ENCODE measurements at regions of chr5 and their contacts with region 1.

Region 1: DNA sequence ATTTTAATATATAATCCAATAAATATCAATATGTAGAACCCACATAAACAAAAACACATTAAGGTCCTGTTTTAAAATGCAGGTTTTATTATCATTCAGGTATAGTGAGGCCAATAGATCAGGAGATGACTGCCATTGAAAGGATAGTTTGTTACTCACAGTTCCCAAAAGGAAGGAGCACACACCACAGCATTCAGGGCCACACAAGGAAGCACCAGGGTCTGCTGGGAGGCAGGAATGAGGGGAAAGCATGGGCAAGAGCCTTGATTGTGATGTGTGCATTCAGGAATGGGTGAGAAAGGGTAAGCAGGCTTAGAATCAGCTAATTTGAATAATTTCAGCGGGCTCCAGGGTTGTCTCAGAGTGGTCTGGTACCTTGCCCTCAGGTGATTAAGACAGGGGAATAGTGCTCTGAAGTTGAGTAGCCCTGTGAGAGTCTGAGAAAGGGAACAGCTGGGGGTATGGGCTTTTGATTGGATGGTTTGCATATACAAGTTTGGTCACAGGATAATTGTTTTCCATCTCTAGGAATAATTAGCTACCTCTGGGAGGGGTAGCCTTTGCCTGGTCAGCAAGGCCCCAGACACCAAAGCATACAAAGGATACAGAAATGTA is 19.8 kb upstream of the OTULIN start:
- DNase-seq: no peak
- ATAC-seq: no peak
- H3K4me3 ChIP-seq: no peak overlapping the region
- H3K27ac ChIP-seq: no peak overlapping the region
- H3K4me1 ChIP-seq: no peaks in the 10 kb centered on the region
- H3K27me3 ChIP-seq: no peaks in the 10 kb centered on the region

Region 2: DNA sequence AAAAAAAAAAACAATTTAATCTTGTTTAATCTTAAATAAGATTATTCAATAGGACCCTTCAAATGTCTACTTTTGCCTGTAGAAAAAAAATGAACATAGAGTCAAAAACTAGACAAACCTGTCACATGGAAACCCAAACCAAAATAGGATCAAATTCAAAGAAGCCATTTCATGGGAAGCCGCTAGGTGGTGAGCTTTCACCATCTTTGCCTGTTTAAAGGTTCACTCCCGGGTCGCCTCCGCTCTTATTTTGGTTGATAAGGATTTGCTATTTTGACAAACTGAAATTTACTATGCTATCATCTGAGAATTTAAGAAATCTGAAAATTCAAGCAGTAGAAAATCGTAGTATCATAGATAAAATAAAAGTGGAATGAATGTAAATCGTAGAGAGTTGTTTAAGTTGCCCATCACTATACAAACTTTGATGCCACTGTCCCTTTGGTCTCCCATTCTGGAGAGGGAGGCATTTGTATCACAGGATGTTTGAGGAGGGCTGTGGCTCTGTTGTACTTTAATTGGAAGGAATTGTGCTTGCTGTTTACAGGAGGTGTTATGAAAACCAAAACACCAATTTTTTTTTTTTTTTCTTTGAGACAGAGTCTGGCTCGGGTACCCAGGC is 656.8 kb before region 1 on chr5:
- intact Hi-C with region 1: loop called (anchors 10 kb)
- DNase-seq: peak in 1 of 2 donors; percentile 58
- ATAC-seq: no peak
- H3K4me3 ChIP-seq: no peak overlapping the region
- H3K27ac ChIP-seq: no peak overlapping the region
- H3K4me1 ChIP-seq: no peaks in the 10 kb centered on the region
- H3K27me3 ChIP-seq: no peaks in the 10 kb centered on the region

Region 3: DNA sequence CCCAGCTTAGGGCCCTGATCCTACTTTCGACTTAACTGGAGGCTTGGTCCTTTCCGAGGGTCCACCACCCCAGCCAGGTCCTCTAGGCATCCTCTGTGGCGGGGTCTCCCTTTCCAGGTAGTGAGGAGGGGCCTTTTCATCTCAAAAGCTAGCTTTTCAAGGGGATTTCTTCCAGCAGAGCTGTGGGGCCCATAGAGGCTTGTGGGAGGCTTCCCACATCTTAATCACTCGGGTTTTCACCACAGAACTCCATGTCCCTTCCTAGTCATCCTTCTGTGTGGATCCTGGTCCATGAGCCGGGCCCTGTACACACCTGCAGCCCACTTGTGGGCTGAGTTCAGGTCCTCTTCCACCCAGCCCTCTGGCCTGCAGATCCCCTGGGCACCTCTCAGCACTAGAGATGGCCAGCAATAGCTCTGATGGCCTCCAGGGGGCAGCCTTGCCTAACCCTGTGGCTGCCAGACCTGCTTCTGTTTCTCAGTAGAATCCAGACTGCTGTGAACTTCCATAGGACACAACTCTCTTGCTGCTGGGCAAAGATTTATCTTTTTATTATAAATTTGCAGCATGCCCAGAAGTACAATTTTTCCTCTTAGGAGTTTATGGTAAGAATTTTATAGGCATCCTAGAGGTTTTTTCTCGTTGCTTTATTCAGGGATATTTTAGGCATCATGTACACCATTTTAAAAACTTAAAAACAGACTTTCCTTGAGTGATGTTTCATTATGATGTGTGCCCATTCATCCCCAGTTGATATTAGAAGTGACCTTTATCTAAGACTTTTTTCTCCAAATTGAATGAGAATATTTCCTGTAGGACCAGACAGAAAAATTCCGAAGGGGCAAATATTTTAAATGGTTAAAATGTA is 292.7 kb before region 1 on chr5:
- intact Hi-C with region 1: loop called in 1 of 2 experiments (anchors 5 kb)
- DNase-seq: peak; percentile 67 to 83
- ATAC-seq: peak; percentile 92
- H3K4me3 ChIP-seq: no peak overlapping the region
- H3K27ac ChIP-seq: no peak overlapping the region
- H3K4me1 ChIP-seq: no peaks in the 10 kb centered on the region
- H3K27me3 ChIP-seq: no peaks in the 10 kb centered on the region

Region 4: DNA sequence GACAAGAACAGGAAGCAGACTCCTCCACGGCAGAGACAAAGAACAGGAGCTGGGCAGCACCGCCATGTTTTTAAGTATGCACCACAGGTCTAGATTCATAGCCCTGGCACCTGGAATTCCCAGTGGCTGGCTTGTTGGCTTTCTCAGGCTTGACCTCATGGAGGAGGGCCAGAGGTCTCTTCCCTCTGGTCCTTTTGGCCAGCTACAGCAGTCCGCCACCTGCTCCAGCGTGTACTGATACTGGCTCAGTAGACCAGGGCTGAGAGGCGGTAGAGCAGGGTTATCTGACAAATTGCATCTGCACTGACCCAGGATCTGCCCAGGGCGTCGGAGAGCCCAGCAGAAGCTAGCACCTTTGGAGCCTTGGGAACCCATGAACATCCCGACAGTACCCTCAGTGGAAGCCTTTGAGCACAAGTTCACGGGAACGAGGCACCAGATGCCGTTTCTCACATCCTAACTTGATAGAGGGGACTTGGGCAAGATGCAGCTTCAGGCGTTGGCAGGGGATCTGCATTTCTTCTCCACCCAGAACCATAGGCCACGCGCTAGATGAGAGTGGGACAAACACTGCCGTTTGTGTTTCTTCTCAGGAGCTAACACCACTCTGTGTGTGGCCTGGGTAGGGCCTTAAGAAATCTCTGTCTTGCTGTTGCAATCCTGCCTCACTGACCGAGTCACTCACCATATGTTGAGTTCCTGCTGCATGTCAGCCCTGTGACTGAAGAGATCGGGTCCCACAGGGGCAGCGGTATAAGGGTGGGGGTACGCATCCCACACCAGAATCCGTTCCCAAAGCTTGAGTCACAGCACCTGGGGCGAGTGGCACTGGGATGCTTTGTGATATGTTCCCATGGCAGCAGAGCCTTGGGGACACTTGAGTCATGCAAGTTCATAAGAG is 153.5 kb before region 1 on chr5:
- intact Hi-C with region 1: loop called in 1 of 2 experiments (anchors 10 kb)
- DNase-seq: no peak
- ATAC-seq: no peak
- H3K4me3 ChIP-seq: no peak overlapping the region
- H3K27ac ChIP-seq: no peak overlapping the region
- H3K4me1 ChIP-seq: no peaks in the 10 kb centered on the region
- H3K27me3 ChIP-seq: no peaks in the 10 kb centered on the region

Region 5: GRCh38 chr5:14700478-14701436 is 56.0 kb after region 1 on chr5:
- intact Hi-C with region 1: no loop called
- DNase-seq: no peak
- ATAC-seq: no peak
- H3K4me3 ChIP-seq: no peak overlapping the region
- H3K27ac ChIP-seq: peak overlapping the region in 1 of 2 donors; percentile 3
- H3K4me1 ChIP-seq: peaks cover 2 to 10% of the 10 kb centered on the region in 2 donors
- H3K27me3 ChIP-seq: no peaks in the 10 kb centered on the region

Measured in aorta (tissue), 5 donors.